Activated CD8-positive, alpha-beta memory T cell treated with anti-CD3 and anti-CD28 coated beads, Interleukin-2, amount 10 ng/mL, durations not matched to agents 7 days and 5 days (primary cell): ENCODE measurements at regions of chr19 and their contacts with region 1.

Region 1: DNA sequence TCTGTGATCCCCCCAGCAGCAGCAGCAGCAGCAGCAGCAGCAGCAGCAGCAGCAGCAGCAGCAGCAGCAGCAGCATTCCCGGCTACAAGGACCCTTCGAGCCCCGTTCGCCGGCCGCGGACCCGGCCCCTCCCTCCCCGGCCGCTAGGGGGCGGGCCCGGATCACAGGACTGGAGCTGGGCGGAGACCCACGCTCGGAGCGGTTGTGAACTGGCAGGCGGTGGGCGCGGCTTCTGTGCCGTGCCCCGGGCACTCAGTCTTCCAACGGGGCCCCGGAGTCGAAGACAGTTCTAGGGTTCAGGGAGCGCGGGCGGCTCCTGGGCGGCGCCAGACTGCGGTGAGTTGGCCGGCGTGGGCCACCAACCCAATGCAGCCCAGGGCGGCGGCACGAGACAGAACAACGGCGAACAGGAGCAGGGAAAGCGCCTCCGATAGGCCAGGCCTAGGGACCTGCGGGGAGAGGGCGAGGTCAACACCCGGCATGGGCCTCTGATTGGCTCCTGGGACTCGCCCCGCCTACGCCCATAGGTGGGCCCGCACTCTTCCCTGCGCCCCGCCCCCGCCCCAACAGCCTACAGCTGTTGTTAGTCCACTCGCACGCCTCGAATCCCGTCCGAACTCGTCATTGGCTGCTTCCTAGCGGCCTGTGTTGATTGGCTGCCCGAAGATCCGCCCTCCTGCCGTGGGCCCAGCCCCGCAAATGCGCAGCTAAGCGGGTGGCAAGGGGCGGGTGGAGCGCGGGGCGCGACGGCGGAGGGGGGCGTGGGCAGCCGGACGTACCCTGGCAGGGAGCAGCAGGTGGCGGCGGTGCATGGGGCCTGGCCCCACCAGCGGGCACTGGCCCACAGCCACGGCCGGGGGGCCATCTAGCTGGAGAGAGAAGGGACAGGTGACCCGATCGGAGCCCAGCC is 1.4 kb upstream of the SIX5 start:
- DNase-seq: peak; percentile 92
- ATAC-seq: peak; percentile 73
- H3K4me3 Mint-ChIP-seq: peak overlapping the region; percentile 78
- H3K27ac Mint-ChIP-seq: peak overlapping the region; percentile 84
- H3K4me1 Mint-ChIP-seq: peaks cover 13% of the 10 kb centered on the region
- H3K27me3 Mint-ChIP-seq: peaks cover 12% of the 10 kb centered on the region

Region 2: GRCh38 chr19:45692187-45693105 is 78.0 kb before region 1 on chr19 and contains the start of gene QPCTL:
- CTCF ChIA-PET with region 1: interaction called, 15 read pairs
- DNase-seq: peak; percentile 99
- ATAC-seq: peak; percentile 92
- H3K4me3 Mint-ChIP-seq: peak within 1 kb of the TSS; percentile 98
- H3K27ac Mint-ChIP-seq: peak within 1 kb of the TSS; percentile 97
- H3K4me1 Mint-ChIP-seq: peaks cover 23% of the 10 kb centered on the region
- H3K27me3 Mint-ChIP-seq: no peaks in the 10 kb centered on the region
- total RNA-seq, gene QPCTL: 9.6 to 12.7 TPM

Region 3: DNA sequence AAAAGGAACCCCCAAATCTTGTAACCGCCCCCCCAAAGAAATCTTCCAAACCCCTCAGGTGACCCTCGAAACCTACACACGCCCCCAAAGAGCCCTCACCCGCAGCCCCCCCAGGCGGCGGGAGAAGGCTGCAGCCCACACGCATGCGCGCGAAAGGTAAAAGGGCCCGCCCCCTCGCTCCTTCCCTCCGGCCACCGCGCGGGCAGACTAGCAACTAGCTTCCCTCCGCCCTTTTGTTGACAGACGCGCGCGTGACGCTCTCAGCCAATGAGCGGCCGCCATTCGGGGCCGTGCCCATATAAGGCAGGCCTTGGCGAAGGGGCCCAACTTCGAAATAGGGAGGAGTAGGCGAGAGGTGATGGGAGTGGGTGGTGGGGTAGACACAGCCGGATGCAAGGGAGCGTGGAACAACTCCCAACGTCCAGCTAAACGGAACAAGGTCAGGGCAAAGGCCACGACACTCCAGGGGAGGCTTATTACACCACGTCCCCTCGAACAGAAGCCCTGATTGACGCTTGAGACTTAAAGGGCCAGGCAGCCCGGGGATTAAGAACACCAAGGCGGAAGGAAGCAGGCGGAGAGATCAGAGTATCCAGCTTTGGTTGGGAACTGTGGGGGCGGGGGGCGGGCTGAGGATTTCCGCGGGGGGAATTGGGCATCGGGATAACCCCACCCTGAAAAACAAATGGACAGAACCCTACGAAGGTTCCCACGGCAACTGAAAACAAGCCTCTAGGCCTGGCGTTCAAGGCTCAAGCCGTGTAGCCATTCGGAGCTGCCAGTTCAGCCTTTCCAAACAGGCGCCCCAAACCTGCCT is 53.1 kb before region 1 on chr19:
- CTCF ChIA-PET with region 1: interaction called, 20 read pairs
- DNase-seq: peak; percentile 99
- ATAC-seq: peak; percentile 98
- H3K4me3 Mint-ChIP-seq: peak overlapping the region; percentile 91
- H3K27ac Mint-ChIP-seq: peak overlapping the region; percentile 85
- H3K4me1 Mint-ChIP-seq: peaks cover 37% of the 10 kb centered on the region
- H3K27me3 Mint-ChIP-seq: no peaks in the 10 kb centered on the region

Region 4: DNA sequence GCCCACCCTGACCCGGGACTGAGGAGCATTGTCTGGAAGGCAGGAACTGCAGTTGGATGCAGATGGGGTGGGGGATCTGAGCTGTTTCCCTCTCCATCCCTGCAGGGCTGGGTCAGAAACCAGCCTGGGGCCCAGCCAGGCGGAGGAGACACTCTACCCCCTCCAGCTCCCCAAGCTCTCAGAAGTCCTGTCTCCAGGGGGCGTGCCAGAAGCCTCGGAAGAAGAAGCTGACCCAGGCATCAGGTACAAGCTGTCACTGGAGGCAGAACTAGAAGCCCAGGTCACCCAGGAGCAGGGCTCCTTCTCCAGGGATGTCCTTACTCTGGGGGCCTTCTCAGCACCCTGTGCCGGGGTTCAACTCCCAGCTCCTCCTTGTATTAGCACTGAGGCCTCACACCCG is 16.9 kb before region 1 on chr19:
- CTCF ChIA-PET with region 1: interaction called, 10 read pairs
- DNase-seq: no peak
- ATAC-seq: no peak
- H3K4me3 Mint-ChIP-seq: no peak overlapping the region
- H3K27ac Mint-ChIP-seq: no peak overlapping the region
- H3K4me1 Mint-ChIP-seq: no peaks in the 10 kb centered on the region
- H3K27me3 Mint-ChIP-seq: no peaks in the 10 kb centered on the region

Region 5: GRCh38 chr19:45792470-45793177 is 22.2 kb after region 1 on chr19 and contains the start of gene DMWD:
- CTCF ChIA-PET with region 1: interaction called, 338 read pairs
- DNase-seq: peak; percentile 100
- ATAC-seq: peak; percentile 90
- H3K4me3 Mint-ChIP-seq: peak within 1 kb of the TSS; percentile 82
- H3K27ac Mint-ChIP-seq: peak within 1 kb of the TSS; percentile 79
- H3K4me1 Mint-ChIP-seq: peaks cover 26% of the 10 kb centered on the region
- H3K27me3 Mint-ChIP-seq: peaks cover 40% of the 10 kb centered on the region
- total RNA-seq, gene DMWD: 47.0 to 47.9 TPM

Region 6: GRCh38 chr19:45809643-45810159 is 39.3 kb after region 1 on chr19:
- CTCF ChIA-PET with region 1: interaction called, 338 read pairs
- DNase-seq: no peak
- ATAC-seq: peak; percentile 59
- H3K4me3 Mint-ChIP-seq: peak overlapping the region; percentile 26
- H3K27ac Mint-ChIP-seq: peak overlapping the region; percentile 88
- H3K4me1 Mint-ChIP-seq: peaks cover 15% of the 10 kb centered on the region
- H3K27me3 Mint-ChIP-seq: peaks cover 6% of the 10 kb centered on the region

Region 7: GRCh38 chr19:45886427-45887199 is 116.2 kb after region 1 on chr19:
- CTCF ChIA-PET with region 1: interaction called, 29 read pairs
- DNase-seq: peak; percentile 97
- ATAC-seq: peak; percentile 85
- H3K4me3 Mint-ChIP-seq: peak overlapping the region; percentile 88
- H3K27ac Mint-ChIP-seq: peak overlapping the region; percentile 96
- H3K4me1 Mint-ChIP-seq: peaks cover 20% of the 10 kb centered on the region
- H3K27me3 Mint-ChIP-seq: no peaks in the 10 kb centered on the region

Region 8: GRCh38 chr19:45927565-45928261 is 157.3 kb after region 1 on chr19:
- CTCF ChIA-PET with region 1: no interaction called
- DNase-seq: peak; percentile 96
- ATAC-seq: peak; percentile 99
- H3K4me3 Mint-ChIP-seq: peak overlapping the region; percentile 57
- H3K27ac Mint-ChIP-seq: peak overlapping the region; percentile 47
- H3K4me1 Mint-ChIP-seq: peaks cover 15% of the 10 kb centered on the region
- H3K27me3 Mint-ChIP-seq: peaks cover 37% of the 10 kb centered on the region